ENCODE measurements at regions of chr9 and their contacts with region 1.

Region 1: DNA sequence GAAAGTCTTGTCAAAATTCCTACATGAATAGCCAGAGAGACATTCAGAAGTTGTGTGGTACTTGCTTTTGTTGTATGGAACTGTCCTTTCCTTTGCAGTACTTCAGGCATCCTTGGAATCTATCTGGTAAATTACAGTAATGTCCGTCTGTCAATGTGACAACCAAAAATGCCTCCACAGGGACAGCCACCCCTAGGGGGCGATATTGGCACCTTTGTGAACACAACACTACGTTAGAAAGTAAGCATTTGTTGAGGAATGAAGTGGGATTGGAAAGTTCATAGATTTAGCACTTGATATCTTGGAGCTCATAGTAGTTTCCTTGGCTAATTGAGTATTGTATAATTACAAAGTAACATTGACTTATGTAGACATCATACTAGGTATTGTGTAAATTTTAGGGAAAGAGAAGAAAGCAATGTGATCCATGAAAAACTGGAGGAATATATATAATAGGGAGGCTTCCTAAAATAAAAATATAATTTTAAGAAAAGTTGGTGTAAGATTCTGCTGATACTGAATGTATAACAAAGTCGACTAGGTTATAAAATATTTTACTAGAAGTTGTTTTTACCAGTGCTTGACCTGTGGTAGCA is 32.7 kb downstream of the TMEFF1 start:
- DNase-seq: peak; percentile 78
- ATAC-seq: peak; percentile 25

Region 2: GRCh38 chr9:100437860-100438805 is 67.5 kb before region 1 on chr9:
- intact Hi-C with region 1: no loop called
- DNase-seq: peak; percentile 43
- ATAC-seq: peak; percentile 55

Region 3: GRCh38 chr9:100598641-100599145 is 93.0 kb after region 1 on chr9:
- intact Hi-C with region 1: loop called (anchors 10 kb)
- DNase-seq: peak; percentile 91
- ATAC-seq: peak; percentile 87

Region 4: GRCh38 chr9:100803951-100804350 is 298.3 kb after region 1 on chr9:
- intact Hi-C with region 1: no loop called
- DNase-seq: no peak
- ATAC-seq: no peak

Region 5: GRCh38 chr9:100838857-100839256 is 333.2 kb after region 1 on chr9:
- intact Hi-C with region 1: no loop called
- DNase-seq: no peak
- ATAC-seq: no peak

Measured in left ventricle myocardium superior (tissue), 1 donor.